Colonic mucosa (tissue), 4 donors: ENCODE measurements at regions of chr17 and their contacts with region 1.

Region 1: GRCh38 chr17:80477647-80478478 is 1.5 kb upstream of the NPTX1 start:
- DNase-seq: no peak
- H3K4me3 ChIP-seq: peak overlapping the region; percentile 10
- H3K27ac ChIP-seq: no peak overlapping the region
- H3K4me1 ChIP-seq: peaks cover 10% of the 10 kb centered on the region
- H3K27me3 ChIP-seq: peaks cover 79% of the 10 kb centered on the region
- CTCF ChIP-seq: no peak

Region 2: DNA sequence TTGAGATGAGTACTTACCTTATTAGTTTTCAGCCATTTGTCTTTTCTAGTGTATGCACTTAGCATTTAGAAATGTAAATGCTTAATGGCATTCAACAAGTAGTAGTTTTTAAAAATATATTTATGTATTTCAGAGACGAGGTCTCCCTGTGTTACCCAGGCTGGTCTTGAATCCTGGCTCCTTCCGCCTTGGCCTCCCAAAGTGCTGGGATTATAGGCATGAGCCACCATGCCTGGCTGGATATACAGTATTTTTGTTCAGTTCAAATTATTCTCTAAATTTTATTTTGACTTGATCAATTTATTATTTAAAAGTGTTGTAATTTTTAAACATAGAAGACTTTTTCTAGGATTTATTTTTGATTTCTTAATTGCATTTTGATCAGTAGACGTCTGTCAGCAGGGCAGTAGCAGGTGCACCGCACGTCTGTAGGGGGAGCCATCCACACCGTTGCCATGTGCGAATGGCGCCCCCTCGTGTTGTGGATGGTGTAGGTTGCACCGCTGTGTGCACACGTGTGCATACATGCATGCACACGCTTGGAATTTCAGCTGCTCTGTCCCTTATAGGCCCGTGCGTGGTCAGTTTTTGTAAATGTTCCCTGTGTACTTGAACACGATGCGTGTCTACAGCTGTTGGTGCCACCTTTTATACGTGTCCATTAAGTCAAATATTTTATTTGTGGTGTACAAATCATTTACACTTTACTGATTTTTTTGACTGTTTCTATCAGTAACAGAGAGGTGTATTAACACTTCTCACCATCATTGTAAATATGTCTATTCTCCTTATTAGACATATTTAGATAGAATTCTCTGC is 97.4 kb after region 1 on chr17:
- intact Hi-C with region 1: loop called (anchors 10 kb)
- DNase-seq: peak; percentile 92
- H3K4me3 ChIP-seq: no peak overlapping the region
- H3K27ac ChIP-seq: no peak overlapping the region
- H3K4me1 ChIP-seq: no peaks in the 10 kb centered on the region
- H3K27me3 ChIP-seq: no peaks in the 10 kb centered on the region
- CTCF ChIP-seq: peak; percentile 100